Colonic mucosa (tissue), 4 donors: ENCODE measurements at regions of chr7 and their contacts with region 1.

Region 1: GRCh38 chr7:23013715-23014649 is at the start of gene HYCC1:
- DNase-seq: peak; percentile 98
- H3K4me3 ChIP-seq: peak within 1 kb of the TSS; percentile 78
- H3K27ac ChIP-seq: peak within 1 kb of the TSS; percentile 57
- H3K4me1 ChIP-seq: no peaks in the 10 kb centered on the region
- H3K27me3 ChIP-seq: no peaks in the 10 kb centered on the region
- CTCF ChIP-seq: peak; percentile 59
- total RNA-seq, gene HYCC1: 5.5 to 10.8 TPM

Region 2: DNA sequence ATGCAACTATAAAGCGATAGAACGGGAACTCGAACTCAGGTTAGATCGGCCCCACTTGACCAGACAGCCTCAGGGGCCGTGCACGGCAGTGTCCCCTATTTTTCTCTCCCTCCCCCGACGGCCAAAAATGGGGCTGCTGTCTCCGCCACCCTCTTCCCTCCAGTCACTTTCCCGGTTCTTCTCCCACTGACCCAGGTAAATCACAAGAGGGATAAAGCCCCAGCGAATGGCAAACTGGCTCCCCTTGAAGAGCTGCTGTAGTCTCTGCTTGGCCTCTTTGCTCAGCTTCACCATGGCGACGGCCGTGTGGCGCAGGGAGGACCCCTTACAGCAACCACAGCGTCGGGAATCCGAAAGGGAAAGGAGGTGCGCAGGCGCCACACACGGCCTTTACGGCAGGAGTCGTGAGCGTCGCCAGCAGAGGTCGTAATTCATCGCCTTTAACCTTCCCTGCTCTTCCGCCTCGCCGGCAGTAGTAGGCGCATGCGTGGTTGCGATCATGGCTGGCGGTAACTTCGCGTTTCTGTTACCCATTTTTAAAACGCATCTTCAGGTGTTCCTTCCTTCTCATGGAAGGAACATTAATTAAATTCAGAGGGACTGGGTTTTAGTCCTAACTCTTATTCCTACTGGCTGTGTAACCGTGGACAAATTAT is 191.4 kb before region 1 on chr7 and contains the start of gene TOMM7:
- intact Hi-C with region 1: loop called (anchors 10 kb)
- DNase-seq: peak; percentile 90
- H3K4me3 ChIP-seq: peak within 1 kb of the TSS; percentile 90
- H3K27ac ChIP-seq: peak within 1 kb of the TSS; percentile 59
- H3K4me1 ChIP-seq: no peaks in the 10 kb centered on the region
- H3K27me3 ChIP-seq: peaks cover 4% of the 10 kb centered on the region
- CTCF ChIP-seq: peak; percentile 40
- total RNA-seq, gene TOMM7: 235 to 288 TPM